ENCODE measurements at regions of chr3 and their contacts with region 1.

Region 1: DNA sequence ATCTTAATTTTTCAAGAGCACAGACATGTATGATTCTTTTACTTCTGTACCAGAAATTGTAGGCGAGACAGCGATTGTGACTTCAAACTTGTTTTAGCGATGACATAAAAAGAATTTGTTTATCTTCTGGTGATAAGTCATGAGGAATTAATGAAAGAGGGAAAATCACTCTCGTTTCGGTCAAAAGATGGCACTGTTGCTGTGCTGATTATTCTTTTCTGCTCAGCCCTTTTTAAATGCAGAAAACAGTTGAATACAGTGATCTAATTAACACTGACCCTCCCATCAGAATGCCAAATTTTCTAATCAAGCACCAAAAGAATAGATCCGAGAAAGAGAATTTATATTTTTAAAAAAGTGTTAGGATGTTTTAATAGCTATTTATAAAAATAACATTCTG is 52.6 kb downstream of the NSUN3 start:
- DNase-seq: no peak
- H3K4me3 ChIP-seq: no peak overlapping the region
- H3K27ac ChIP-seq: no peak overlapping the region
- H3K4me1 ChIP-seq: no peaks in the 10 kb centered on the region
- H3K27me3 ChIP-seq: no peaks in the 10 kb centered on the region
- CTCF ChIP-seq: no peak
- POLR2A ChIP-seq: no peak

Region 2: DNA sequence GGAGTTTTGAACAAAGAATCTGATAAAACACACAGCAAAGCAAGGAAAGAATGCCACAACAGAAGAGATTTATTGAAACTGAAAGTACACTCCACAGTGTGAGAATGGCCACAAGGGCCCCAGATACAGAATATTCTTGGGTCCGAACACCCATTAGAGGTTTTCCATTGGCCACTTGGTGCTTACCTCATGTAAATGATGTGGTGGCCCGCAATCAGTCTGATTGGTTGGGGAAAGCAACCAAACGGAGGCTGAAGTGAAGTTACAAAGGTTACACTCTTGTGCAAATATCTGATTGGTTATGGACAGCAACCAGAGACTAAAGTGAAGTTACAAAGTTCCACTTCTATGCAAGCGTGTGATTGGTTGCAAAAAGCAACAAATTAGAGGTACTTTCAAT is 32.2 kb before region 1 on chr3:
- intact Hi-C with region 1: no loop called
- DNase-seq: no peak
- H3K4me3 ChIP-seq: no peak overlapping the region
- H3K27ac ChIP-seq: no peak overlapping the region
- H3K4me1 ChIP-seq: no peaks in the 10 kb centered on the region
- H3K27me3 ChIP-seq: no peaks in the 10 kb centered on the region
- CTCF ChIP-seq: no peak
- POLR2A ChIP-seq: no peak

Region 3: GRCh38 chr3:94101851-94102250 is 13.6 kb before region 1 on chr3:
- intact Hi-C with region 1: no loop called
- DNase-seq: no peak
- H3K4me3 ChIP-seq: no peak overlapping the region
- H3K27ac ChIP-seq: no peak overlapping the region
- H3K4me1 ChIP-seq: no peaks in the 10 kb centered on the region
- H3K27me3 ChIP-seq: no peaks in the 10 kb centered on the region
- CTCF ChIP-seq: no peak
- POLR2A ChIP-seq: no peak

Region 4: DNA sequence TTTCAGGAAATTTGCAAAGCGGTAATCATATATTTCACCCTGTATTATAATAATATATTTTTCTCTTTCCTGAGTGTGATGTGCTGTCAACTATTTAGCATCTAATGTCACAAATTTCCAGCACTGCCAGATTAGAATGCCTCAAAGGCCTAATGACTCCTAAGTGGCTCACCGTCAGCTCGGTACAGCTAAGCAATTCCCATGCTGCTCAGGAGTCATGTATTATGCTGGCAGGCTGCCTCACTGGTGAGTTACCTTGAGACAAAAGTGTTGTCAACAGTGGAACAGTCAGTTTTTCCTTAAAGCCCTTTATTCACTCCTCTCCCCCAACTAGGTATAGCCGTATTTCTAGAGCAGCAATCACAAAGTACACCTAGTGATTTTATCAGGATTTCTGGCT is 31.0 kb after region 1 on chr3:
- intact Hi-C with region 1: loop called (anchors 2 kb)
- DNase-seq: no peak
- H3K4me3 ChIP-seq: no peak overlapping the region
- H3K27ac ChIP-seq: no peak overlapping the region
- H3K4me1 ChIP-seq: no peaks in the 10 kb centered on the region
- H3K27me3 ChIP-seq: no peaks in the 10 kb centered on the region
- CTCF ChIP-seq: no peak
- POLR2A ChIP-seq: no peak